GM18951 (cell line): ENCODE measurements at regions of chr3 and their contacts with region 1.

Region 1: DNA sequence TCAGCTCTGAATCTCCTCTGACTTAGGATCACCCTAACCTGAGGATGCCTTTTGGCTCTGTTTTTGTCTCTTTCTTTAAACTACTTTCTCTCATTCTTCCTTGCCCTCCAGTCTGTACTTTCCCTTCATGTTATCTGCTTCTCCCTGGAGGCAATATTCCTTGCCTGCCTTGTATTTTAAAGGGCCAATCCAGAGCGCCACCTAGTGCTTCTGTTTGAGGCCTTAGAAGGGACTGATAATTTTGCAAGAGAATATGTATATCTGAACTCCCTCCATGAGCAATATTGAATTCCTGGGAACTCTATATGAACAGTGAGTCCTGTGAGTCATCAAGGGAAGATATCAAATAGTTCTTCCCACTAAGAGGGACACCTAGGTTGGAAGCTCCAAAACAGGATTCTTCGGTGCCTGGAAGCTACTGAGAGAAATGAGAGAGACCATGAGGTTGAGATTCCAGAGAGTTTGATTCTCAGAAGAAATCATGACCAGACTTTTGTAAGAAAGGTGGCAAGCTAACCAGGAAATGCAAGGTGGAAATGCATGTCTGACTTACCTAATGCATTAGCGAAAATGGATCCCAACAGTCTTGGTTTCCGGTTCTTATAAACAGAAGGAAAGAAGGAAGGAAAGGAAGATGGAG is 203.8 kb upstream of the CD96 start:
- POLR2A ChIP-seq: no peak

Region 2: GRCh38 chr3:111045564-111045963 is 292.6 kb before region 1 on chr3:
- in situ Hi-C with region 1: no loop called
- POLR2A ChIP-seq: no peak

Region 3: GRCh38 chr3:111246967-111247760 is 91.0 kb before region 1 on chr3:
- in situ Hi-C with region 1: no loop called
- POLR2A ChIP-seq: no peak

Region 4: DNA sequence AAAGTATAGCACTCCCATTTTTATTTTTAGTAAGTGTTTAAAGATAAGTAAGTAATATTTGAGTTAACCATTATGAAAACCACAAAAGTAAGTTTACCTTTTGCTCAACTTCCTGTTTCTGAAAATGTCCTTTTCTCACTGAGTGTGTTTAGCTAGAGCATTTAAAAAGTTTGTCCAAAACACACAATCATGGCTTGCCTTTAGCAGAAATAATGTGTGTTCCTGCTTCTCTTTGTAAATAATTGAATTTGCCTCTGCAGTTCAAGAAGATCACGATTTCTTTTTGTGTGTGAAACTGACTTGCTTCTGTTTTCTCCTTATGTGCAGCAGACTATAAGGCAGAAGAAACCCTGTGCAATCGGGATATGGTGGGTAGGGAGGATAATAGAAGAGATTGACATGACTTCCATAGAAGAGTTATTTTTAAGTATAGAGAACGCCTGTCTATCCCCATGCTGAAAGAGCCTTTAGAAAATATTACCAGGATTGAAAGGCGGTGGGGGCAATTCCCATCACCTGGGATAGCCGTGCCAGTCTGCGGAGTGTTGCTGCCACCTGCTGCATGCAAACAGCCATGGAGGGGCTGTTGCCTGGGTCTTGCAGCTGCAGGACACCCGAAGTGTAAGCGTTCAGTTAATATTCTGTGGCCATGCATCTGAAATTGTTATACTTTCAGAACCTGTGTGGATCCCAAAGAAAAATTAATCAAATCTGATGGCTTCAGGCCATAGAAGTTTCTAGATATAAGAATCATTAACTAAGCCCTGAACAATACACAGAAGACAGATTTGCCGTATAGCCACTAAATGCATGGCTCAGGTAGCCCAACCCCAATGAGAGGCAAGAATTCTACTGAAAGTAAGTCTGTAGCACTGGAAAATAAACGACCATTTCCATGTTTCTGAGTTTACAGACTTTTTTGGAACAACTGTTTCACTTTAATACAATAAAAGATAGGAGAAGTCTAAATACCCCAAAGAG is 201.5 kb after region 1 on chr3:
- in situ Hi-C with region 1: loop called (anchors 10 kb)
- POLR2A ChIP-seq: no peak

Region 5: DNA sequence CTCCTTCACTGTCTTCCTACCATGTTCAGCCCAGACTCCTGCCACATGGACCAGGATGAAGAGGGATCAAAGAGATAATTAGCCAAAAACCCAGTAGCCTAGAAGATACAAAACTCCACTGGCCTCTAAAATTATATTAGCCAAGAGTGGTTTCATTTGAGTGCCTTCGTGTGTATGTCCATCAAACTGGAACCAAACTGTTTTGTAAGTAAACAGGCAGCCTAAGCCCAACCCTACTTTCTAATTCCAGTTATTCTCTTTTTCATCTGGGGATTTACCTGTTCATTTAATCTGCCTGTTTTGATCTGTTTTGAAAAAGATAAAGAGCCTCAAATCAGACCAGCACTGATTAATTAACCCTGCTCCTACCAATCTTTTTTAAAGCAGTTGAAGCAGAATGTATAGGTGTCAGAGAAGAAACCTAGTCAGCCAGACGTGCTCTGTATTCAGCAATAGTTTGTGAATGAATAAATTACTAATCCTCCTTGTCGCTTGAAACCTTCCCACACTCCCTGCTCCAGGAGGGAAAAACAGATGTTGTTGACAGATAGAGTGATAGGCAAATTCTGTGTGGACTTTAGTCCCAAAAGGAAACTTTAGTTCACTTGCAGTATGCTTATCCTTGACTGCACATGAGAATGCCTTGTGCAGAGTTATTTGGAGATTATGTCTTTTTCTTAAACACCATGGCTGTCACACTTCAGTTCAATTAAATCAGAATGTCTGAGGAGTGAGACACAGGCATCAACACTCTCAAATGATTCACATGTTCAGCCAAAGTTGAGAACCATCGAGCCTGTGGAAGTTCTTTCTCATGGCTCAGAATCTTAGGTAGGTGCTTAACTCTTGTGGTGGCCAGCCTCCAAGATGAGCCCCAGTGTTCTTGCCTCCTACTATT is 312.4 kb after region 1 on chr3:
- in situ Hi-C with region 1: no loop called
- POLR2A ChIP-seq: no peak